ENCODE measurements at regions of chrX and their contacts with region 1.

Region 1: GRCh38 chrX:29359276-29359675 is 772.0 kb downstream of the IL1RAPL1 start:
- DNase-seq: no peak
- H3K4me3 ChIP-seq: no peak overlapping the region
- CTCF ChIP-seq: no peak
- POLR2A ChIP-seq: no peak

Region 2: GRCh38 chrX:27998666-27999065 is 1360.6 kb before region 1 on chrX:
- intact Hi-C with region 1: no loop called
- DNase-seq: no peak
- H3K4me3 ChIP-seq: no peak overlapping the region
- CTCF ChIP-seq: no peak
- POLR2A ChIP-seq: no peak

Region 3: DNA sequence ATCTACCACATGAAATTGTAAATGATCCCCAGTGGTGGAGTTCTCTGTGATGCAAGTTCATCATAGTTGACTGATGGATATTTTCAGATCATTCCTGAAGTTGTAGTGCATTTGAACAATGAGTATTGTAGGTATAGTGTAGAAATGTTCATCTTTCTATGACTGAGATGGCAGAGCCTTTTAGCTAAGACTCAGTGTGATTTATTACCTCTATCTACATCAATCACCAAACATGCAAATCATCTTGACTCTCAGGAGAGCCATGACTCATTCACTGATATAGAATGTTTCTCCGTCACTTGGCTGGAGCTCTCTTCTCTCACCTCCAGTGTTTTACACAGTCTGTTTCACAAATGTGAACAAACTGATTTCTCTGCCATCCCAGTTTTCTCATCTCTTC is 379.4 kb before region 1 on chrX:
- intact Hi-C with region 1: no loop called
- DNase-seq: no peak
- H3K4me3 ChIP-seq: no peak overlapping the region
- CTCF ChIP-seq: no peak
- POLR2A ChIP-seq: no peak

Region 4: DNA sequence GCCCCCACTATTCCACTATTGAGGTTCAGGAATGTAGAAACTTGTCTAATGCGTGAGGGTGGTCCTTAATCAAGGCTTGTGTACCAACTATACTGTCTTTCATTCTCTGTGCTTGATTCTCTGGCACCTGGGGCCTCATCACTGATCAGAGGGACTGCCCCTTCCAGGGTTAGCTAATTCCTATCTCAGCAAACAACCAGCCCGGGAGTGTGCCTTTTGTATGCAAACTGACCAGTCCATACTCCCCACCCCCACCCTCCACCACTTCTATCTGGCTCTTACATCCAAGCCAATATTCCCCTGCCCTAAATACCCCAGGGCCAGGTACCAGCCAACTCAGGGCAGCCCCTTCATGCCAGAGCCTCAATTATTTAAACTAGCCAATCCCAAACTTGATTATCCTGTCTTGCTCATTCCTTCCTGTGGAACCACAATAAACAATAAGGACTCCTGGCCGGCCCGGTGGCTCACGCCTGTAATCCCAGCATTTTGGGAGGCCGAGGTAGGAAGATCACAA is 1653.3 kb after region 1 on chrX:
- intact Hi-C with region 1: loop called (anchors 5 kb)
- DNase-seq: no peak
- H3K4me3 ChIP-seq: no peak overlapping the region
- CTCF ChIP-seq: no peak
- POLR2A ChIP-seq: no peak

Measured in lower leg skin (tissue), 4 donors.